ENCODE measurements at regions of chr17 and their contacts with region 1.

Region 1: DNA sequence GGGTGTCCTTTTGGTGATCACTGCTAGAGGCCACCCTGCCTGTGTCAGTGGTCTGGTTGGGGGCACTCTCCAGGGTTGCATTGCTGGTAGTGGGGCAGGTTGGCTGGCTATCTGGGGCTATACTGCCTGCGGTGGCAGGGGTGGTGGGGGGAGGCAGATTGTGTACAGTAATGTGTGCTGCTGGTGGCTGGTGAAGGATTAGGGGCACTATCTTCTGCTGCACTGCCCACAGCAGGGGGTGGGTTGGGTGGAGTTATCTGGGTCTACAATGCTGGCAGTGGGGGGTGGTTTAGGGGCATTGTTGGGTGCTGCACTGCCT is 204.0 kb upstream of the WSB1 start:
- DNase-seq: no peak
- H3K4me3 Mint-ChIP-seq: no peak overlapping the region
- H3K27ac Mint-ChIP-seq: no peak overlapping the region
- H3K4me1 Mint-ChIP-seq: no peaks in the 10 kb centered on the region
- H3K27me3 Mint-ChIP-seq: no peaks in the 10 kb centered on the region

Region 2: GRCh38 chr17:27072885-27073284 is 17.0 kb before region 1 on chr17:
- intact Hi-C with region 1: no loop called
- DNase-seq: no peak
- H3K4me3 Mint-ChIP-seq: no peak overlapping the region
- H3K27ac Mint-ChIP-seq: no peak overlapping the region
- H3K4me1 Mint-ChIP-seq: no peaks in the 10 kb centered on the region
- H3K27me3 Mint-ChIP-seq: no peaks in the 10 kb centered on the region

Region 3: GRCh38 chr17:27106347-27106981 is 16.6 kb after region 1 on chr17:
- intact Hi-C with region 1: no loop called
- DNase-seq: no peak
- H3K4me3 Mint-ChIP-seq: no peak overlapping the region
- H3K27ac Mint-ChIP-seq: no peak overlapping the region
- H3K4me1 Mint-ChIP-seq: no peaks in the 10 kb centered on the region
- H3K27me3 Mint-ChIP-seq: no peaks in the 10 kb centered on the region

Region 4: DNA sequence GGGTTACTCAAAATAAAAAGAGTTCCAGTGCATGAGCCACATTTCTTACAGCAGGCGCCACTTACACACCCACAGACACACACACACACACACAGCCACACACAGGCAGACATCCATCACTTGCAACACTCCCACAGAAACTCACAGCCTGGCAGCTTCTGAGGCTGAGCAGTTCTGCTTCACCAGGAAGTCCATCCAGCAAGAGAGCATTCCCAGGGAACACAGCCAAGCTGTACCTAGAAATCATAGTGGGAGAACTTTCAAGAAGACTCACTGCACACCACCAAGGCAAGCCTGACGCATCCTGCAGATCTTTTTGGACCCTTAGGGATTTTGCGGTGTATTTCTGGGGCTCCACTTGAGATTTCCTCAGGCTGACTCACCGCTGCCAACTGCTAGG is 63.1 kb after region 1 on chr17:
- intact Hi-C with region 1: loop called (anchors 10 kb)
- DNase-seq: no peak
- H3K4me3 Mint-ChIP-seq: no peak overlapping the region
- H3K27ac Mint-ChIP-seq: no peak overlapping the region
- H3K4me1 Mint-ChIP-seq: no peaks in the 10 kb centered on the region
- H3K27me3 Mint-ChIP-seq: no peaks in the 10 kb centered on the region